ENCODE measurements at regions of chr20 and their contacts with region 1.

Region 1: DNA sequence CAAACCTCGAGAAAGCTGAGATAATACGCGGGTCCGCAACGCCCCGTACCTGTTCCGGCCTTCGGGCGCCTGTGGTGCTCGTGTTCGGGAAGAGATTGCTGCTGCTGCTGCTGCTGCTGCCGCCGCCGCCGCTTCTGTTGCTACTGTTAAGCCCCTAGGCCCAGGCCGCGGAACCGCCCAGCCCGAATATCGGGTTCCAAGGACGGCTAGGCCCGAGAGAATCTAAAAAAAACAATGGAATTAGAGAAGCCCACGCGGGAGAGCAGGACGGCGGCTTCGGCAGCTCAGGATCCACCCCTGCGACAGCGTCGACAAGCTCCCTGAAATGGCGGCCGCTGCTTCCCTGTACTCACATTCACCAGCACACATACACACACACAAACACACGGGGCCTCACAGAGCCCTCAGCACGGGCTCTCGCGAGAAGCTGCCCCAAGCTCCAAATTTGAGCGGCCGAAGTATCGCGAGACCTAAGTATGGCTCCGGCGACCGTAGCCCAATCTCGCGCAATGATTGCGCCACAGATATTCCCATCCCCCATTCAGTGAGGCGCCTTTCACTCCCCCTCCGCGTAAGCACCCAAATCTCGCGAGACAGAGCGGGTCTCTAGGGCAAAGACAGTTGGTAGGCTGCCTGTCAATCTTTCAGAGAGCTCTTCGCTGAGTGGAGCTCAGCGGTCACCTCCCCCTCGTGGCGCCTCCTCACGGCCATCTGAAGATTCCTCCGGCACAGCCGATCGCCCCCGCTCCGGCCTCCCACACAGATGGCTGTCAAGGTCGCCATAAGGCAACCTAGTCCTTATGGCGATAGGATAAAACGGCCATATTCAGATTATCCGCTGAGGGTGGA is at the start of gene RBM39:
- DNase-seq: peak; percentile 100
- H3K4me3 Mint-ChIP-seq: peak within 1 kb of the TSS; percentile 98
- H3K27ac Mint-ChIP-seq: peak within 1 kb of the TSS; percentile 99
- H3K4me1 Mint-ChIP-seq: peaks cover 40% of the 10 kb centered on the region
- H3K27me3 Mint-ChIP-seq: no peaks in the 10 kb centered on the region
- total RNA-seq, gene RBM39: 349 and 357 TPM in 2 replicates

Region 2: GRCh38 chr20:35664544-35665221 is 77.4 kb before region 1 on chr20 and contains the starts of genes CPNE1 and RBM12:
- intact Hi-C with region 1: loop called (anchors 1 kb)
- DNase-seq: peak; percentile 91
- H3K4me3 Mint-ChIP-seq: peak within 1 kb of the TSS; percentile 95
- H3K27ac Mint-ChIP-seq: peak within 1 kb of the TSS; percentile 99
- H3K4me1 Mint-ChIP-seq: peaks cover 48% of the 10 kb centered on the region
- H3K27me3 Mint-ChIP-seq: no peaks in the 10 kb centered on the region
- total RNA-seq, gene CPNE1: 304 and 308 TPM in 2 replicates
- total RNA-seq, gene RBM12: 151 and 168 TPM in 2 replicates

Region 3: DNA sequence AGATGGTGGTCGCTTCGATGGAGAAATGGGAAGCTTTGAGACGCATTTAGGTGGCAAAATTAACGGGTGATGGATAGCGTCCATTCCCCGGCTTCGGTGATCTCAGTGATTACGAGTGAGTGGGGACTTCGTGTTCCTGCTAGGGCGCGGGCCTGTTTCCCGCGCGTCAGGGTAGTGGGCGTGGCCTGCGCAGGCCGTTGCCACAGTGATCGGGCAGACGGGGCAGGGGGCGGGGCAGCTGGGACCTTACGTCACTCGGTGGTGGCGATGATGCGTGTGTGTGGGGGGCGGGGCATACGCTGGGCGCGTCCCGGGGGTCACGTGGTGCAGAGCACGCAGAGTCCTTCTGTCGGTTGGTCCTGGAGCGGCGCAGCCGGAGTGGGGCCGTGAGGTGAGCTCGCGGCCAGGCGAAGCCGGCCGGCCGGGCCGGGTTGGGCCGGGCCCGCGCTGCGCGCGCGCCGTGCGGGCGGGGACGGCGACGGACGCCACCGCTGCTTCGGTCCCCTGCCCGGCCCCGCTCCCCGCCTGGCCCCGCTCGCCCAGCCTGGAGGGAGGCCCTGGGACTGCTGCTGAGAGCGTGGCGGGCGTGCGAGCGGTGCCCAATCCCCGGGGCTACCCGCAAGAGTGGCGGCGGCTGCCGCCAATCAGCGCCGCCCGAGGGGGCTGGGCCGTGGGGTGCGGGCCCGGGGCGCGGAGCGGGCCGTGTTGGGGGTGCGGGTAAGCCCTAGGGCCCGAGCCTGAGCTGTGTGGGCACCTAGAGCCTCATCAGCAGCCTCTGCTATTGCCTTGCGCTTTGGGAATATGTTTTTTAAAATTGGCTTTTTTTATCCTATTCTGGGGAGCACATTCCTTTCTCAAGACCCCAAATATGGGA is 29.8 kb after region 1 on chr20 and contains the start of gene PHF20:
- intact Hi-C with region 1: loop called (anchors 1 kb)
- DNase-seq: peak; percentile 98
- H3K4me3 Mint-ChIP-seq: peak within 1 kb of the TSS; percentile 94
- H3K27ac Mint-ChIP-seq: peak within 1 kb of the TSS; percentile 95
- H3K4me1 Mint-ChIP-seq: peaks cover 60% of the 10 kb centered on the region
- H3K27me3 Mint-ChIP-seq: no peaks in the 10 kb centered on the region
- total RNA-seq, gene PHF20: 50.5 and 61.9 TPM in 2 replicates

Region 4: DNA sequence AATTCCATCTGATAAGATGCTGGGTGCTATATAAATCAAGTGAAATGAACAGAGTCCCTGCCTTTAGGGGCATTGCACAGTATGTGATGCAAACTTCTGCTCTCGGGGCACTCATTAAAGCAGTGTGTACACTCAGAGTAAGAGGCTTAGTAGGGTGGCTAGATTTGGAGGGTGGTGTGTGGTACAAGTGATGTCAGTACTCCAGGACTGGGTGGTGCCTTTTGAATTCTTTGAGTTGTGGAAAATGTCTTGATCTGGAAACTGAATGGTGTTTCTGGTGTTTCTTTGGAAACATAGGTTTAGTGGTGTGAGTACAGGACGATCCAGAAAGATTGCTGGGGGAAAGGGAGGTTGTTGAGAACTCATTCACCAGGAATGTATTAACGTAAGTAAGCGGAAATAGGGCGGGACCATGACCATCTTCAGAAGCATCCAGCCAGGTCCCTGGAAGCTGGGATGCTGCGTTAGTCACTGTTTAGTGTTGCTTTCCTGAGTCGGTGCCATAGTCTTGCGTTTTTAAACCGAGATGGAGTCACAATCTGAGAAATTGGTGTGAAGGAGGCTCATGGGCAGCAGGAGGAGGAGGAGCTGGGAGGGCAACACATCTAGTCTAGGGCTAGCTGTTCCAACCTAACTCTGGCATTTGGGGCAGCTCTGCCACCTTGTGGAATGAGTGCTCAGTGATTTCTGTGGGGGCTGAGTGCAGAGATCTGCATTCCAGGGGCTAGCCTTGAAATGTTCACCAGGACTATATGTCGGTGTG is 141.8 kb after region 1 on chr20:
- intact Hi-C with region 1: loop called (anchors 2 kb)
- DNase-seq: peak; percentile 31
- H3K4me3 Mint-ChIP-seq: no peak overlapping the region
- H3K27ac Mint-ChIP-seq: no peak overlapping the region
- H3K4me1 Mint-ChIP-seq: peaks cover 7% of the 10 kb centered on the region
- H3K27me3 Mint-ChIP-seq: no peaks in the 10 kb centered on the region

Region 5: GRCh38 chr20:36591854-36592641 is 849.9 kb after region 1 on chr20:
- intact Hi-C with region 1: loop called (anchors 10 kb)
- DNase-seq: peak; percentile 36
- H3K4me3 Mint-ChIP-seq: peak overlapping the region; percentile 27
- H3K27ac Mint-ChIP-seq: peak overlapping the region; percentile 77
- H3K4me1 Mint-ChIP-seq: peaks cover 62% of the 10 kb centered on the region
- H3K27me3 Mint-ChIP-seq: no peaks in the 10 kb centered on the region

Measured in activated T-helper 1 cell treated with anti-CD3 and anti-CD28 coated beads, Interleukin-12 subunit alpha, Interleukin-12 subunit beta, Interleukin-2, Interleukin-4 antibody, amounts not matched to agents 30 ng/mL and 10 ng/mL and 1 ng/mL, durations not matched to agents 14 hours and 24 hours and 36 hours (primary cell).